ENCODE measurements at regions of chr20 and their contacts with region 1.

Region 1: GRCh38 chr20:561437-562231 is 18.0 kb upstream of the CSNK2A1 start:
- DNase-seq: peak; percentile 24 to 59 (median 53)
- H3K4me3 ChIP-seq: no peak overlapping the region
- H3K27ac ChIP-seq: no peak overlapping the region
- H3K4me1 ChIP-seq: no peaks in the 10 kb centered on the region
- H3K27me3 ChIP-seq: no peaks in the 10 kb centered on the region
- CTCF ChIP-seq: peak; percentile 32 to 83 (median 75)
- EP300 ChIP-seq: no peak
- POLR2A ChIP-seq: no peak

Region 2: GRCh38 chr20:621125-621756 is 59.6 kb after region 1 on chr20:
- intact Hi-C with region 1: no loop called
- DNase-seq: no peak
- H3K4me3 ChIP-seq: no peak overlapping the region
- H3K27ac ChIP-seq: no peak overlapping the region
- H3K4me1 ChIP-seq: no peaks in the 10 kb centered on the region
- H3K27me3 ChIP-seq: no peaks in the 10 kb centered on the region
- CTCF ChIP-seq: no peak
- EP300 ChIP-seq: no peak
- POLR2A ChIP-seq: no peak

Region 3: GRCh38 chr20:645318-646106 is 83.9 kb after region 1 on chr20:
- intact Hi-C with region 1: loop called in 3 of 4 experiments (anchors 5 to 10 kb)
- DNase-seq: peak; percentile 58 to 87 (median 72)
- H3K4me3 ChIP-seq: no peak overlapping the region
- H3K27ac ChIP-seq: no peak overlapping the region
- H3K4me1 ChIP-seq: peaks cover 3% of the 10 kb centered on the region
- H3K27me3 ChIP-seq: no peaks in the 10 kb centered on the region
- CTCF ChIP-seq: peak; percentile 73 to 79 (median 79)
- EP300 ChIP-seq: no peak
- POLR2A ChIP-seq: no peak

Region 4: GRCh38 chr20:667391-667964 is 105.8 kb after region 1 on chr20:
- intact Hi-C with region 1: loop called in 1 of 4 experiments (anchors 10 kb)
- DNase-seq: no peak
- H3K4me3 ChIP-seq: no peak overlapping the region
- H3K27ac ChIP-seq: no peak overlapping the region
- H3K4me1 ChIP-seq: no peaks in the 10 kb centered on the region
- H3K27me3 ChIP-seq: no peaks in the 10 kb centered on the region
- CTCF ChIP-seq: no peak
- EP300 ChIP-seq: no peak
- POLR2A ChIP-seq: no peak

Region 5: GRCh38 chr20:733861-734260 is 172.2 kb after region 1 on chr20:
- intact Hi-C with region 1: loop called in 2 of 4 experiments (anchors 5 kb)
- DNase-seq: no peak
- H3K4me3 ChIP-seq: no peak overlapping the region
- H3K27ac ChIP-seq: no peak overlapping the region
- H3K4me1 ChIP-seq: no peaks in the 10 kb centered on the region
- H3K27me3 ChIP-seq: no peaks in the 10 kb centered on the region
- CTCF ChIP-seq: no peak
- EP300 ChIP-seq: no peak
- POLR2A ChIP-seq: no peak

Measured in ovary (tissue), 10 donors.